Calu3 (cell line): ENCODE measurements at regions of chr2 and their contacts with region 1.

Region 1: DNA sequence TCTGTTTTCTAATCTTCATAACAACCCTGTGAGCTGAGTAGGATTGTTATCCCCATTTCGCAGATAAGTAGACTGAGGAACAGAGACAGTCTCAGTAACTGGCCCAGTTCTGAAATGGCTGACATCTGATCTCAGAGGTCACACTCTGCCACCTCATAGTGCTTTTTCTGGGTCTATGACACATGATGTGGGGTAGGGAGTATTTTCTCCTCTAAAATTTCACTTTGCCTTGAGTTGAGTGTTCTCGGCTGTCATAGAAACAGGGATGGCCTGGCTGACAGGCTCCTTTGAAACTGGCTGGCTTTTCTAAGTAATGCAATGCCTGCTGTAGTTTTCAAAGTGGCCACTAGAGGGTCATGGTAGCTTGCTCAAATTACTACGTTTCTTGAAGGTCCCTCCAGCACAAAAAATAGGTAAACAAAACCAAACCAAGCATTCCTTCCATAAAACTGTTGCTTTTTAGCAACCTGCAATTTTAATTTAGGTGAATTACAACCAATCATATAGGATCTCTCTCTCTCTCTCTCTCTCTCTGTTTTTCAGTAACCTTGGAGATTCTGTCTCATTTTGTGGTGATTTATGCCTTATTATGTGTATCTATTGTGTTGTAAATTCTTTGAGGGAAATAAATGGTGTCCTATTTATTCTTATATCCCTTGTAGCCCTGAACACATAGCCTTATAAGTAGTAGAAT is 84.2 kb upstream of the TTN start:
- DNase-seq: peak; percentile 69
- H3K4me3 Mint-ChIP-seq: no peak overlapping the region
- H3K27ac Mint-ChIP-seq: no peak overlapping the region
- H3K4me1 Mint-ChIP-seq: no peaks in the 10 kb centered on the region
- H3K27me3 Mint-ChIP-seq: peaks cover 13% of the 10 kb centered on the region
- CTCF ChIP-seq: peak; percentile 89

Region 2: DNA sequence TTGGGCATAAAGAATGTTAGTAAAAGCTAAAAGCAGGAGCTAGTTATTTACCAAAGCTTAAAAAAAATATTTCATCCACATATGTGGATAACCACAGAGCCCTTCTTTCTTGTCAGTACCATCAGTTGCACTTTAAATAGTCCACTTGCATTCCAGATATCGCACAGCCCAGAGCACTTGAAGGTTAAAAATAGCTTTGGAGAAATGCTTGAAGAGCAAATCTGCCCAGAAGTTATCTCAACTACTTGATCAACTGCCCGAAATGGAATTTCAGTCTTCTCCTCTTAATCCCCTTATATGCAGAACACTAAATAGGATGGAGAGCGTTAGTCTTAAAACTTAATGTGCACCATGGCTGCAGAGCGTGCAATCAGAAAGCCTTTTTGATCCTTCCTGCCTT is 262.8 kb before region 1 on chr2:
- CTCF ChIA-PET with region 1: no interaction called
- intact Hi-C with region 1: no loop called
- DNase-seq: no peak
- H3K4me3 Mint-ChIP-seq: no peak overlapping the region
- H3K27ac Mint-ChIP-seq: no peak overlapping the region
- H3K4me1 Mint-ChIP-seq: no peaks in the 10 kb centered on the region
- H3K27me3 Mint-ChIP-seq: no peaks in the 10 kb centered on the region
- CTCF ChIP-seq: no peak

Region 3: GRCh38 chr2:178804791-178805190 is 86.6 kb before region 1 on chr2:
- CTCF ChIA-PET with region 1: no interaction called
- intact Hi-C with region 1: loop called (anchors 5 kb)
- DNase-seq: no peak
- H3K4me3 Mint-ChIP-seq: no peak overlapping the region
- H3K27ac Mint-ChIP-seq: no peak overlapping the region
- H3K4me1 Mint-ChIP-seq: peaks cover 8% of the 10 kb centered on the region
- H3K27me3 Mint-ChIP-seq: no peaks in the 10 kb centered on the region
- CTCF ChIP-seq: peak; percentile 56

Region 4: GRCh38 chr2:178914259-178914849 is 22.9 kb after region 1 on chr2:
- CTCF ChIA-PET with region 1: interaction called, 5 read pairs
- intact Hi-C with region 1: loop called (anchors 1 kb)
- DNase-seq: peak; percentile 83
- H3K4me3 Mint-ChIP-seq: no peak overlapping the region
- H3K27ac Mint-ChIP-seq: no peak overlapping the region
- H3K4me1 Mint-ChIP-seq: peaks cover 7% of the 10 kb centered on the region
- H3K27me3 Mint-ChIP-seq: no peaks in the 10 kb centered on the region
- CTCF ChIP-seq: peak; percentile 83